H1 (cell line): ENCODE measurements at regions of chr1 and their contacts with region 1.

Region 1: GRCh38 chr1:37323486-37324377 is 150.6 kb upstream of the ZC3H12A start:
- DNase-seq: peak; percentile 44 to 87
- H3K4me3 ChIP-seq: no peak overlapping the region
- H3K27ac ChIP-seq: no peak overlapping the region
- H3K4me1 ChIP-seq: peaks cover 0 to 5% (median 1%) of the 10 kb centered on the region in 4 experiments; a peak in 3 of 7 replicates
- H3K27me3 ChIP-seq: no peaks in the 10 kb centered on the region; a peak in 1 of 7 replicates
- CTCF ChIP-seq: peak; percentile 67 to 85 (median 76)
- EP300 ChIP-seq: no peak
- POLR2A ChIP-seq: no peak
- RAD21 ChIP-seq: peak; percentile 92 to 94

Region 2: DNA sequence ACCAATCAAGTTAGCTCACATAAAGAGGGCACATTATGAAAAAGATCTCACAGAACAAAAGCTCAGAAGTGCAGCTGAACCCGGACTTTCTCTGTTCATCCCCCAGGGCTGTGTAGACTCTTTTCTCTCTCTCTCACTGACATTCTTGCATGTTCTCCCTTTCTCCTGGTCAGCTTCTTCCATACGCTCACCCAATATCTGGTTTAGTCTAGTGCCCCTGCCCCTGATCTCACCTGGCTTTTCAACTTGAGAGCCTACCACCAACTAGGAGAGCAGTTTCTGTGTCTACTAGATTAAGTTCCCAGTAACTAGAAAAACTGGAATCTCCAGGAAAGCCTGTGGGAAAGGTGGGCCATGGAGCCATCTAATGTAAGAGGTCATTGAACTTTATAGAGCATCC is 162.6 kb before region 1 on chr1:
- CTCF ChIA-PET with region 1: no interaction called
- POLR2A ChIA-PET with region 1: no interaction called
- DNase-seq: no peak
- H3K4me3 ChIP-seq: no peak overlapping the region
- H3K27ac ChIP-seq: no peak overlapping the region
- H3K4me1 ChIP-seq: no peaks in the 10 kb centered on the region
- H3K27me3 ChIP-seq: no peaks in the 10 kb centered on the region
- CTCF ChIP-seq: no peak
- EP300 ChIP-seq: no peak
- POLR2A ChIP-seq: no peak
- RAD21 ChIP-seq: no peak

Region 3: GRCh38 chr1:37234941-37235418 is 88.8 kb before region 1 on chr1:
- CTCF ChIA-PET with region 1: interaction called, 4 read pairs
- POLR2A ChIA-PET with region 1: interaction called, 10 read pairs
- DNase-seq: peak in 1 of 2 experiments; percentile 52
- H3K4me3 ChIP-seq: no peak overlapping the region
- H3K27ac ChIP-seq: no peak overlapping the region
- H3K4me1 ChIP-seq: peaks cover 10 to 21% (median 14%) of the 10 kb centered on the region in 4 experiments
- H3K27me3 ChIP-seq: no peaks in the 10 kb centered on the region
- CTCF ChIP-seq: no peak
- EP300 ChIP-seq: no peak
- POLR2A ChIP-seq: no peak
- RAD21 ChIP-seq: no peak

Region 4: GRCh38 chr1:37274938-37275631 is 48.6 kb before region 1 on chr1:
- CTCF ChIA-PET with region 1: interaction called, 41 read pairs
- POLR2A ChIA-PET with region 1: interaction called, 4 read pairs
- DNase-seq: no peak
- H3K4me3 ChIP-seq: no peak overlapping the region
- H3K27ac ChIP-seq: no peak overlapping the region
- H3K4me1 ChIP-seq: peaks cover 3 to 22% (median 12%) of the 10 kb centered on the region in 4 experiments
- H3K27me3 ChIP-seq: no peaks in the 10 kb centered on the region
- CTCF ChIP-seq: no peak
- EP300 ChIP-seq: no peak
- POLR2A ChIP-seq: no peak
- RAD21 ChIP-seq: no peak

Region 5: DNA sequence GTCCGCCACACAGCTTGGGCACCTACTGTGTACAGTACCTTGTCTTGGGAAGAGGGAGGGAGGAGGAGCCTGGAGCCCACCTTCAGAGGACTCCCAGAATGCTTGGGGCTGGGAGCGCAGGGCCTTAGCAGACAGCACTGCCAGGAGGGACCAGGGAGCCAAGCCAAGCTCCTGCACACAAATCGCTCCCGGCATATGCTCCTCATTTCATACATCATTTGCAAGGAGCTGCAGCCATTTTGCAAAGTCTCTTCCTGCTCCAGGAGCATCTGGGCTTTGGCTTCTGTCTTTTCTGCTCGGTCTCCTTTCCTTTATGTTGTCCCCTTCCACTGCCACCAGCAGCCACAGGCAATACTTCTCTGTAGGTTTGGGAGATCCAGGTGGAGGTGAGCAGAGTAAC is 24.5 kb before region 1 on chr1:
- CTCF ChIA-PET with region 1: interaction called, 21 read pairs
- POLR2A ChIA-PET with region 1: interaction called, 4 read pairs
- DNase-seq: no peak
- H3K4me3 ChIP-seq: no peak overlapping the region
- H3K27ac ChIP-seq: no peak overlapping the region
- H3K4me1 ChIP-seq: peaks cover 0 to 2% (median 0%) of the 10 kb centered on the region in 4 experiments; a peak in 1 of 7 replicates
- H3K27me3 ChIP-seq: no peaks in the 10 kb centered on the region; a peak in 2 of 7 replicates
- CTCF ChIP-seq: no peak
- EP300 ChIP-seq: no peak
- POLR2A ChIP-seq: no peak
- RAD21 ChIP-seq: no peak

Region 6: GRCh38 chr1:37338658-37339057 is 14.9 kb after region 1 on chr1:
- CTCF ChIA-PET with region 1: interaction called, 12 read pairs
- POLR2A ChIA-PET with region 1: interaction called, 19 read pairs
- DNase-seq: no peak
- H3K4me3 ChIP-seq: no peak overlapping the region
- H3K27ac ChIP-seq: no peak overlapping the region
- H3K4me1 ChIP-seq: peaks cover 0 to 3% (median 1%) of the 10 kb centered on the region in 4 experiments; a peak in 2 of 7 replicates
- H3K27me3 ChIP-seq: no peaks in the 10 kb centered on the region
- CTCF ChIP-seq: no peak
- EP300 ChIP-seq: no peak
- POLR2A ChIP-seq: no peak
- RAD21 ChIP-seq: no peak